ENCODE measurements at regions of chr9 and their contacts with region 1.

Region 1: GRCh38 chr9:88991066-88992034 is at the start of gene S1PR3:
- DNase-seq: peak; percentile 13 to 69 (median 52)
- ATAC-seq: peak; percentile 42; the same call in 2 of the 3 replicates
- H3K4me3 ChIP-seq: peak within 1 kb of the TSS; percentile 28; the same call in 1 of the 2 replicates
- H3K27ac ChIP-seq: no peak within 1 kb of the TSS
- H3K4me1 ChIP-seq: peaks cover 0 to 11% of the 10 kb centered on the region in 2 experiments; a peak in 3 of 5 replicates
- H3K27me3 ChIP-seq: peaks cover 0 to 25% of the 10 kb centered on the region in 2 experiments; a peak in 2 of 5 replicates
- CTCF ChIP-seq: no peak
- EP300 ChIP-seq: no peak
- POLR2A ChIP-seq: no peak
- RAD21 ChIP-seq: no peak
- polyA plus RNA-seq, gene S1PR3: 0.03 to 0.07 TPM

Region 2: DNA sequence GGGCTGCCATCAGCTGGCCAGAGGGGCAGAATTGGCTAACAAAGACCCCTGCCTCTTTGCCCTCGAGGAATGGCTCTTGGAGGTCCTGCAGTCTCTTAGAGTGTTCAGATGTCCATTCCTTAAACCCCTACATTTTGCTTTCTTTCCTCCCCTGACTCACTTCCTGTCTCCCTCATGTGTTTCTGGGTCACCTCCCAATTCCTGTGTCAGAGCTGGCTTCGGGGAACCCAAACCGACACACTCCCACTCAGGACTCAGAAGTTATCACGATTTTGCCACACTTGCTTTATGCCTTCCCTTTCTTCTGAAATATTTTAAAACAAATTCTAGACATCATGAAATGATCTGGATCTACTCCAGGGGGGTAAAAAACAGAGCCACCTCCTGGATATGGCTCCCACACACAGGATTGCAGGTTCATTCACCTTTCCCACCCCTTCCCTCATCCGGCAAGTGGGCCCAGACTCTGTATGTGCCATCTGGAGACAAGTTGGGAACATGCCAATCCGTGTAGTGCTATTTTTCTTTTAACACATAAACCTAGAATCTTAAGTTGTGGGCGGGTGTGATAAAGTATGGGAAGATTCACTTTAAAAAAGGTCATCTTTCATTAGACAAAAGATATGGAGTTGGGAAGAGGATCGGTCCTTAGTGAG is 310.7 kb before region 1 on chr9:
- CTCF ChIA-PET with region 1: no interaction called
- POLR2A ChIA-PET with region 1: no interaction called
- in situ Hi-C with region 1: no loop called
- intact Hi-C with region 1: loop called (anchors 10 kb)
- DNase-seq: no peak
- ATAC-seq: no peak
- H3K4me3 ChIP-seq: no peak overlapping the region
- H3K27ac ChIP-seq: no peak overlapping the region
- H3K4me1 ChIP-seq: no peaks in the 10 kb centered on the region
- H3K27me3 ChIP-seq: peaks cover 0 to 8% of the 10 kb centered on the region in 2 experiments; a peak in 1 of 5 replicates
- CTCF ChIP-seq: no peak
- EP300 ChIP-seq: no peak
- POLR2A ChIP-seq: no peak
- RAD21 ChIP-seq: no peak

Region 3: DNA sequence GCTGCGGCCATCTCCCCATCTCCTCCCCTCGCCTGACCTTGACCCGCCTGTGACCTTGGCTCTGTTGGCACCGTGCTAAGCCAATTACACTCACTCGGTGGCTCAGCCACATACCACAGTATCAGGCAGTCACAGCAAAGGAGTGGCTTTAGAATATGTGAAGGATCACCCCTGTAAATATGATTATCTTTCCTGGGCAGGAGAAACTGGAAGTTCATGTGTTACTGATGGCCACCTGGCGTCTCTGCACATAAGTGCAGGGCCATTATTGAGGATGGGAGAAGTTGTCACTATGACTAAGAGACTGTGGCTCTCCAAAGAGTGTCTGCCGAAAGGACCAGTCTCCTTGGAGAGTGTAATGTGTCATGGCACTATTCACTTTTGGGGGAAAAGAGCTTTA is 117.0 kb before region 1 on chr9:
- CTCF ChIA-PET with region 1: no interaction called
- POLR2A ChIA-PET with region 1: no interaction called
- in situ Hi-C with region 1: no loop called
- intact Hi-C with region 1: loop called (anchors 10 kb)
- DNase-seq: peak; percentile 10 to 62 (median 14)
- ATAC-seq: peak; percentile 81
- H3K4me3 ChIP-seq: no peak overlapping the region
- H3K27ac ChIP-seq: no peak overlapping the region
- H3K4me1 ChIP-seq: no peaks in the 10 kb centered on the region; a peak in 2 of 5 replicates
- H3K27me3 ChIP-seq: no peaks in the 10 kb centered on the region; a peak in 1 of 5 replicates
- CTCF ChIP-seq: peak; percentile 47 to 57 (median 51); a peak in 5 of 6 replicates
- EP300 ChIP-seq: no peak
- POLR2A ChIP-seq: no peak
- RAD21 ChIP-seq: peak; percentile 22 to 60; a peak in 3 of 4 replicates

Measured in K562 (cell line).